Aorta (tissue), 5 donors: ENCODE measurements at regions of chr14 and their contacts with region 1.

Region 1: DNA sequence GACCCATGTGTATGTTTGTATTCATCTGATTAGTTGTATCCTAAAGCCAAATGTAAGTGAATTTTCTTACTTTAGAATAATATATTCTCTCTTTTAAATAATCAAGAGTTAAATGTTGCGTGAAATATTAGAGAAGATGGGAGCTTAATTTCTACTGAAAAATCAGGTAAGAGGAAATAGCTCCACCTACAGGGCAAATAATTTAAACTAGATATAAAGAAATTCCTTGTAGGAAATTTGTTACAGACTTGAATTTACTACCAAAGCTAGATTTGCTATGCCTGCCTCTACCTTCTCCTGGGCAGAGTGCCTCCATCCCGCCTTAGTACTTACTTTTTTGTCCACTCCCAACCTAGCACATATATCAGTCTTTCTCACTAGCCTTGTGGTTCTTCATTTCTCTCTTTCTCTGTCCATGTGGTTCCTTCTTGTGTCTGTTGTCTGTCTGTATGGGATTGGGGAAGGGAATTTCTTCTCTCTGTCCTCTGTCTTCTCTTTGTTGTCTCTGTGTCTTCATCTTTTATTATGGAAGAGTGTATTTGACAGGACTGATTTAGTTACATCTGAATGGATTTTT is 44.7 kb downstream of the PALS1 start:
- DNase-seq: no peak
- ATAC-seq: no peak
- H3K4me3 ChIP-seq: no peak overlapping the region
- H3K27ac ChIP-seq: no peak overlapping the region
- H3K4me1 ChIP-seq: no peaks in the 10 kb centered on the region
- H3K27me3 ChIP-seq: no peaks in the 10 kb centered on the region

Region 2: GRCh38 chr14:67111022-67111421 is 174.9 kb before region 1 on chr14:
- intact Hi-C with region 1: no loop called
- DNase-seq: no peak
- ATAC-seq: no peak
- H3K4me3 ChIP-seq: no peak overlapping the region
- H3K27ac ChIP-seq: no peak overlapping the region
- H3K4me1 ChIP-seq: no peaks in the 10 kb centered on the region
- H3K27me3 ChIP-seq: no peaks in the 10 kb centered on the region

Region 3: DNA sequence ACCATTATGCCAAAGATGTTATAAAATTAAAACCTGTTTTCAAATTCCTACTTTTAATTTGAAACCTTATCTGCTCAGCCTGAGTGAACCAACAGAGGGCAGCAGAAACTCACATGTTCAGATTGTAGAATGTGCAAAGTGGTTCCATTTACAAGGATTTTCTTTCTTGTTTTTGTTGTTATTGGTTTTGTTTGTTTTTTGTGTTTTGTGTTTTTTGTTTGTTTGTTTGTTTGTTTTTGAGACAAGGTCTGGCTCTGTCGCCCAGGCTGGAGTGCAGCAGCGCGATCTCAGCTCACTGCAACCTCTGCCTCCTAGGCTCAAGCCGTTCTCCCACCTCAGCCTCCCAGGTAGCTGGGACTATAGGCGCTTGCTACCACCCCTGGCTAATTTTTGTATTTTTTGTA is 119.5 kb before region 1 on chr14:
- intact Hi-C with region 1: loop called (anchors 2 kb)
- DNase-seq: no peak
- ATAC-seq: no peak
- H3K4me3 ChIP-seq: no peak overlapping the region
- H3K27ac ChIP-seq: no peak overlapping the region
- H3K4me1 ChIP-seq: no peaks in the 10 kb centered on the region
- H3K27me3 ChIP-seq: no peaks in the 10 kb centered on the region

Region 4: DNA sequence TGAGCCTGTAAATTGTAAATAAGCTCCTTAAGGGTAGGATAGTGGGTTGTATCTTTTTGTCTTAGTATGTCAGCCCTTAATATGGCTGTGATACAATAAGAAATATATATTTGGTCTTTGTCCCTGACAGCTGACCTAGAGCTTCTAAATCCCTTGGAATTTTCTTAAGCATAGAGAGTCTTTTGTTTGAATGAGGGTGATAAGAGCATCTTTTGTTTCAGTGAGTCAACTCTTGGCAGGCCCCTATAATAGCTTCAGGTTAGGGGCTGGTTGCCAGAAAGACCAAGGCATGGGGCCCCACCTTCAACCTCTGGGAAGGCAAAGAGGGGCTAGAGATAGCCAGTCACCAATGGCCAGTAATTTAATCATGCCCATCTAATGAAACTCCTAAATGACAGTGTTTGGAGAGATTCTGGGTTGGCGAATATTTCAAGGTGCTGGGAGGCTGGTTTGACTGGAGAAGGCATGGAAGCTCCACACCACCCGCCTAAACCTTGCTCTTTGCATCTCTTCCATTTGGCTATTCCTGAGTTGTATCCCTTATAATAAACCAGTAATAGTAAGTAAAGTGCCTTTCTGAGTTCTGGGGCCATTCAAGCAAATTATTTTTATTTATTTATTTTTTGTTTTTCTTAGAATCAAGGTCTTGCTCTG is 34.3 kb before region 1 on chr14:
- intact Hi-C with region 1: no loop called
- DNase-seq: no peak
- ATAC-seq: no peak
- H3K4me3 ChIP-seq: no peak overlapping the region
- H3K27ac ChIP-seq: no peak overlapping the region
- H3K4me1 ChIP-seq: no peaks in the 10 kb centered on the region
- H3K27me3 ChIP-seq: no peaks in the 10 kb centered on the region